Dorsolateral prefrontal cortex (tissue), 120 donors: ENCODE measurements at regions of chr9 and their contacts with region 1.

Region 1: DNA sequence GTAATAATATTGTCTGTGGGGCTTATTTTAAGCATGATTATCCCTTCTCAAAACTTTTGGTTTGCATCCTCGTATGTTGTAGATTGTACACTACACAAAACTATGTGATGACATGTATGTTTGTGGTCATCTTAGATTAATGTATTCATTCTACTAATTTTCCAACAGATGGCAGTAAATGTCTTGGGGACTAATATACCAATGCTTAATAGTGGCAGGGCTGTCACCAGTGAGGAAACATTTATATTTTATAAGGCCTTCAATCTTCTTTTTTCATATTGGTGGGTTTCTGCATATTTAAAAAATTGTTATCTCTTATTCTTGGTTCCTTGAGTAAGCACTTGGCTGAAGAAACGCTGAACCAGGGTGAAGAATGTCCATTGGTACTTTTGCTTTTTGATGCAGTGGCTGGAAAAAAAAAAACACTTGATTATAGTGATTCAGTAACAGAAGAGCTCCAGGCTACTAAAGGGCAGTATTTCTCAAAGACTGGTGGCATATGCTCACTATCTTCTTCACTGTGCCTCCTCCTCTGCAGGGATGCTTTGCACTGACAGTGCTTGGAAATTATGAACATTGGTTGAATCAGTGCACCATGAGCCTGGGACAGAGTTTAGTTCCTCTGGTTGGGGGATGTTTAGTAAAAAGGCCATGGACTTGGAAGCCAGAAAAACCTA is 530.3 kb downstream of the RASEF start:
- DNase-seq: no peak
- H3K4me3 ChIP-seq: no peak overlapping the region
- H3K27ac ChIP-seq: no peak overlapping the region
- H3K27me3 ChIP-seq: no peaks in the 10 kb centered on the region
- CTCF ChIP-seq: peak in 50 of 56 donors; percentile 20 to 69 (median 50)

Region 2: GRCh38 chr9:82961504-82962125 is 429.0 kb after region 1 on chr9:
- intact Hi-C with region 1: loop called in 1 of 2 experiments (anchors 5 kb)
- DNase-seq: peak; percentile 63 to 91 (median 79)
- H3K4me3 ChIP-seq: peak overlapping the region in 6 of 59 donors; percentile 7 to 24 (median 10)
- H3K27ac ChIP-seq: no peak overlapping the region
- H3K27me3 ChIP-seq: no peaks in the 10 kb centered on the region
- CTCF ChIP-seq: peak; percentile 77 to 94 (median 88)